ENCODE measurements at regions of chr15 and their contacts with region 1.

Region 1: GRCh38 chr15:69755551-69756310 is 303.1 kb downstream of the RPLP1 start:
- DNase-seq: peak; percentile 94
- H3K4me3 Mint-ChIP-seq: peak overlapping the region; percentile 69
- H3K27ac Mint-ChIP-seq: peak overlapping the region; percentile 87
- H3K4me1 Mint-ChIP-seq: peaks cover 67% of the 10 kb centered on the region
- H3K27me3 Mint-ChIP-seq: peaks cover 2% of the 10 kb centered on the region

Region 2: DNA sequence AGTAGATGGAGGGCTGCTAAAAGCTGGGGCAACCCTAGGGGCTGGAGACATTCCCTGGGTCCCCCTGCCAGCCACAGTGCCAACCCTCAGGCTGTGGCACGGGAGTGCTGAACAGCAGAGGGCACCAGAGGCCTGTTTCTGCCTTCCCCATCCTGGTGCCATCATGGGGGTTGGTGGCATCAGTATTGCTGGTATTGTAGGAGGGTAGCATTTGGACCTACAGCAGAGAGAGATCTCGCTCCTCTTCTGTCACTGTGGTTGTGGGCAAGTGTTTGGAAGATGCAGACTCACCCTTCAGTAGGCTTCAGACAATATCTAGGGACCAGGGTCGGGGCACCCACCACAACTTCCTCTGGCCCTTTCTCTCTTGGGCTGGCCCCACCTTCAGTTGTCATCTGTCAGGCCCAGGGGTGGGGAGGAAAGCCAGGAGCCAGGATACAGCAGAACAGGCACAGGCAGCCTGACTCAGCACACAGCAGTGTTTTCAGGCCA is 179.7 kb before region 1 on chr15:
- intact Hi-C with region 1: loop called (anchors 1 kb)
- DNase-seq: peak; percentile 87
- H3K4me3 Mint-ChIP-seq: no peak overlapping the region
- H3K27ac Mint-ChIP-seq: peak overlapping the region; percentile 30
- H3K4me1 Mint-ChIP-seq: peaks cover 39% of the 10 kb centered on the region
- H3K27me3 Mint-ChIP-seq: peaks cover 9% of the 10 kb centered on the region

Region 3: DNA sequence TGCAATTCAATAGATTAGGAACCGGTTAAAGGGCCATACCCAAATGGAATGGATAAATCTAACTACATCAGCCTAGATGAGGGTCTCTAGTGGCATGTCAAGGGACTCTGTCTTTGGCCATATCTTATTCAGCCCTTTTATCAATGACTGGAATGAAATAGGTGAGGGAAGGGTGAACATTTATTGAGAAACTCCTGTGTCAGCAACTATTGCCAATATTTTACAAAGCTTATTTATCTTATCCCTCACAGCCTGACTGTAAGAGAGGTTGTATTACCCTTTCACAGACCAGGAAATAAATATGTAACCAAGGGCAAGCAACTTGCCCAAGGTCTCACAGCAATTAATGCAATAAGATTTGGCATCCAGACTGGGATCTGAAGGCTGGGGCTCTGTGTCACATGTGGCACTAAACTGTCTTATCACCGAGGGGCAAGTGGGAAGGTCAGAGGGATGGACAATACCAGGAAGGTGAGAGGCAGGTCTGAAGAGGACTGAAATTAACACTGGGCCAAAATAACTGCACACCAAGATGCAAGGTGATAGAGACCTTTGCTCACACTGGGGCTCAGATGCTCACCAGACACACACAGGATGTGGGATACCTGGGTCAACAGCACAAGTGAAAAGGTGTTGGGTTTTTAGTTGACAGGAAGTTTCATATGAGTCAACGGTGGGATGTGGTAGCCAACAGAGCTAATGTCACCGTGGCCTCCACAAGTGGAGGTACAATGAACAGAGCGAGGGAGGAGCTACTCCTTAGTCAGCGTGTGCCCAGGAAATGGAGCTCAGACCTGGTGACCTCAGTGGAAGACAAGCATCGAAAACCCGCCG is 41.8 kb before region 1 on chr15:
- intact Hi-C with region 1: loop called (anchors 1 kb)
- DNase-seq: peak; percentile 94
- H3K4me3 Mint-ChIP-seq: peak overlapping the region; percentile 61
- H3K27ac Mint-ChIP-seq: peak overlapping the region; percentile 84
- H3K4me1 Mint-ChIP-seq: peaks cover 52% of the 10 kb centered on the region
- H3K27me3 Mint-ChIP-seq: peaks cover 16% of the 10 kb centered on the region

Region 4: GRCh38 chr15:70140543-70141375 is 385.0 kb after region 1 on chr15:
- intact Hi-C with region 1: loop called (anchors 5 kb)
- DNase-seq: peak; percentile 78
- H3K4me3 Mint-ChIP-seq: peak overlapping the region; percentile 3
- H3K27ac Mint-ChIP-seq: peak overlapping the region; percentile 59
- H3K4me1 Mint-ChIP-seq: peaks cover 28% of the 10 kb centered on the region
- H3K27me3 Mint-ChIP-seq: peaks cover 38% of the 10 kb centered on the region

Measured in activated CD4-positive, alpha-beta T cell treated with anti-CD3 and anti-CD28 coated beads, Interleukin-2, amount 10 ng/mL, durations not matched to agents 24 days and 14 days (primary cell).